ENCODE measurements at regions of chr20 and their contacts with region 1.

Region 1: DNA sequence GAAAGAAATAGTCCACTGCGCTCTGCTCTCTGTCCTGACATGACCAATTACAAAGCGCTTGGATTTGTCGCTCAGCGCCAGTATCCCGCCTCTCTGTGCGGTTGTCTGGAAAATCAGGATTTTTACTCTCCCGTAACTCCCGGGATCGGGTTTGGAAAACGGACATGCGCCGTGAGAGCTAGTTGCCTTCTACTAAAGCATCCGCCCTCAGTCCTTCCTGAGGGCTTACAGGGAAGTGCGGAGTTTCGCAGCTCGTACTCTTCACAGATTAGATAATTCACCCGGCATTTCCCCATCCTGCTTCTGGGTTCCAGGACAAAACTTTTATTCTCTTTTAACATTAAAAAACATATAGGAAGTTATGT is 427 bp upstream of the MKKS start:
- DNase-seq: peak; percentile 79
- ATAC-seq: peak; percentile 53
- H3K4me3 Mint-ChIP-seq: peak overlapping the region; percentile 81
- H3K27ac Mint-ChIP-seq: peak overlapping the region; percentile 94
- H3K4me1 Mint-ChIP-seq: peaks cover 50% of the 10 kb centered on the region
- H3K27me3 Mint-ChIP-seq: no peaks in the 10 kb centered on the region
- CTCF ChIP-seq: no peak

Region 2: GRCh38 chr20:10350188-10350842 is 84.1 kb before region 1 on chr20:
- CTCF ChIA-PET with region 1: no interaction called
- POLR2A ChIA-PET with region 1: interaction called, 4 read pairs
- intact Hi-C with region 1: loop called (anchors 2 kb)
- DNase-seq: no peak
- ATAC-seq: no peak
- H3K4me3 Mint-ChIP-seq: no peak overlapping the region
- H3K27ac Mint-ChIP-seq: peak overlapping the region; percentile 62
- H3K4me1 Mint-ChIP-seq: peaks cover 22% of the 10 kb centered on the region
- H3K27me3 Mint-ChIP-seq: no peaks in the 10 kb centered on the region
- CTCF ChIP-seq: no peak

Region 3: DNA sequence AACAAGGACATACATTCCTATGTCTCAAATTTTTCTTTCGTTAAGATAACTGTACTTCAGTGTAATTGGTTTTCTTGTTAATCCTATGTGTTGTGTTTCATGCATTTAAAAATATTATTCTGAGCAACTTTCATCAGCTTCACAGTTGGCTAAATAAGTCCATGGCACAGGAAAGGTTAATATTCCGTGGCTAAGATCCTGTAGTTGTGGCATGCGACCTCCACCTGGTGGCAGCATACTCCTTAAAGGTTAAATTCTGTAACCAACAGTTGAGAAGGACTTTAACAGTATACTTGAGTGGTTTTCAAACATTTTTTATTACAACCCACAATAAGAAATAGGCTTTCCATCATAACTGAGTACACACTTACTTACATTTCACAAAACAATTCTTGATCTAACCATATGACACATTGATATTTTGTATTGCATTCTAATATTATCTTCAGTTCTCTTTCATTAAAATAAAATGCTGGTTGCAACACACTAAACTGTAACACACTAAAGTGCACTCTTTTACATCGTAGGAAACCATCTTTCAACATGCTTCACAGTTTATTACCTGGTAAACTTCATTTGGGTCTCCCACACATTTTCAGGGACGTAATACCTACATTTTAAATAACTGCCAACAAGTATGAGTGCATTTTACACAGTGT is 119.0 kb after region 1 on chr20:
- CTCF ChIA-PET with region 1: no interaction called
- POLR2A ChIA-PET with region 1: no interaction called
- intact Hi-C with region 1: no loop called
- DNase-seq: peak; percentile 74
- ATAC-seq: peak; percentile 54
- H3K4me3 Mint-ChIP-seq: no peak overlapping the region
- H3K27ac Mint-ChIP-seq: no peak overlapping the region
- H3K4me1 Mint-ChIP-seq: peaks cover 37% of the 10 kb centered on the region
- H3K27me3 Mint-ChIP-seq: no peaks in the 10 kb centered on the region
- CTCF ChIP-seq: peak; percentile 72